ENCODE measurements at regions of chr17 and their contacts with region 1.

Region 1: DNA sequence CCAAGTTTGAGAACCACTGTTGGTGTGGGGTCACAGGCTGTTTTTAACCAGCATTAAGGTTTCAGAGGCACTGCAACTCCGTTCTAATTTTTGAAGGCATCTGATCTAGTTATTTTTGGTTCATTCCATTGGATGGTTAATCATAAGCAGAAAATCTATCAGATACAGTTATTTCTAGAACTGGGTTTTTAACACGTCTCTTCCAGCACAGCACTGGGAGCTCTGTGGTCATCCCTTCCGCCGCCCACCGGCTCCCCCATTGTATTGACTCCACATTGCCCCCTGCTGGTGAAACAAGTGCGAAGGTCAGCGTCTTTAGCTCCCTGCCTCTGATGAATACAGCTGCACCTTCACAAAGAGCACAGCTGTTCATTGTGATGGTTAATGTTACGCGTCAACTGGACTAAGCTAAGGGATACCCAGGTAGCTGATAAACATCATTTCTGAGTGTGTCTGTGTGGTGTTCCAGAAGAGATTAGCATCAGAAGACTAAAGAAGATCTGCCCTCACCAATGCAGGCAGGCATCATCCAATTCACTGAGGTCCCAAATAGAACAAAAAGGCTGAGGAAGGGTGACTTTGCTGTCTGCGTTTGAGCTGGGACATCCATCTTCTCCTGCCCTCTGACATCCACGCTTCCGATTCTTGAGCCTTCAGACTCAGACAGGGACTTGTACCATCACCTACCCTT is 8.5 kb downstream of the CCL18 start:
- DNase-seq: peak; percentile 80
- ATAC-seq: peak; percentile 85
- H3K4me3 Mint-ChIP-seq: no peak overlapping the region
- H3K27ac Mint-ChIP-seq: no peak overlapping the region
- H3K4me1 Mint-ChIP-seq: peaks cover 25% of the 10 kb centered on the region
- H3K27me3 Mint-ChIP-seq: peaks cover 9% of the 10 kb centered on the region

Region 2: DNA sequence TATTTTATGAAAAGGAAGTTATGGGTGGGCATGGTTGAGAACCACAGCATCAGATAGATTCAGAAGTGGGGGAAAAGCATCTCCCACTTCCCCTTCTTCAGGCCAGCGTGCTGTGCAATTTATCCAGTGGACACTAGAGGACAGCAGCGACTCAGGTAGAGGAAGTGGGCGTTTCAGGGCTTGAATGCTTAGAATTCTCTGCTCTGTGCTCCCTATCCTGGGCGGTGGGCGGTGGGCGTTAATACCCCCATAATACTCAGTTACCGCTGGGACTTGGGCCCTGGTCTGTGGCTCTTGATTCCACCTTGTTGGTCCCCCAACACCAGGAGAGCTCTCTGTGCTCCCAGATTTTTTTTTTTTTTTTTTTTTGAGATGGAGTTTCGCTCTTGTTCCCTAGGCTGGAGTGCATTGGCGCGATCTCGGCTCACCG is 125.4 kb before region 1 on chr17:
- CTCF ChIA-PET with region 1: interaction called, 13 read pairs
- POLR2A ChIA-PET with region 1: no interaction called
- DNase-seq: peak; percentile 75
- ATAC-seq: peak; percentile 87
- H3K4me3 Mint-ChIP-seq: no peak overlapping the region
- H3K27ac Mint-ChIP-seq: no peak overlapping the region
- H3K4me1 Mint-ChIP-seq: peaks cover 10% of the 10 kb centered on the region
- H3K27me3 Mint-ChIP-seq: peaks cover 7% of the 10 kb centered on the region

Region 3: GRCh38 chr17:35981908-35982330 is 90.7 kb before region 1 on chr17:
- CTCF ChIA-PET with region 1: interaction called, 22 read pairs
- POLR2A ChIA-PET with region 1: no interaction called
- DNase-seq: no peak
- ATAC-seq: no peak
- H3K4me3 Mint-ChIP-seq: no peak overlapping the region
- H3K27ac Mint-ChIP-seq: no peak overlapping the region
- H3K4me1 Mint-ChIP-seq: no peaks in the 10 kb centered on the region
- H3K27me3 Mint-ChIP-seq: peaks cover 7% of the 10 kb centered on the region

Region 4: GRCh38 chr17:36057911-36058310 is 14.7 kb before region 1 on chr17:
- CTCF ChIA-PET with region 1: interaction called, 28 read pairs
- POLR2A ChIA-PET with region 1: no interaction called
- DNase-seq: no peak
- ATAC-seq: no peak
- H3K4me3 Mint-ChIP-seq: no peak overlapping the region
- H3K27ac Mint-ChIP-seq: no peak overlapping the region
- H3K4me1 Mint-ChIP-seq: no peaks in the 10 kb centered on the region
- H3K27me3 Mint-ChIP-seq: peaks cover 23% of the 10 kb centered on the region

Region 5: GRCh38 chr17:36133602-36134236 is 61.1 kb after region 1 on chr17:
- CTCF ChIA-PET with region 1: interaction called, 10 read pairs
- POLR2A ChIA-PET with region 1: no interaction called
- DNase-seq: no peak
- ATAC-seq: no peak
- H3K4me3 Mint-ChIP-seq: no peak overlapping the region
- H3K27ac Mint-ChIP-seq: no peak overlapping the region
- H3K4me1 Mint-ChIP-seq: no peaks in the 10 kb centered on the region
- H3K27me3 Mint-ChIP-seq: peaks cover 23% of the 10 kb centered on the region

Measured in activated CD8-positive, alpha-beta T cell treated with anti-CD3 and anti-CD28 coated beads, Interleukin-2, amount 10 ng/mL, durations not matched to agents 7 days and 5 days (primary cell).